Activated CD4-positive, alpha-beta T cell treated with anti-CD3 and anti-CD28 coated beads for 36 hours (primary cell): ENCODE measurements at regions of chr3 and their contacts with region 1.

Region 1: DNA sequence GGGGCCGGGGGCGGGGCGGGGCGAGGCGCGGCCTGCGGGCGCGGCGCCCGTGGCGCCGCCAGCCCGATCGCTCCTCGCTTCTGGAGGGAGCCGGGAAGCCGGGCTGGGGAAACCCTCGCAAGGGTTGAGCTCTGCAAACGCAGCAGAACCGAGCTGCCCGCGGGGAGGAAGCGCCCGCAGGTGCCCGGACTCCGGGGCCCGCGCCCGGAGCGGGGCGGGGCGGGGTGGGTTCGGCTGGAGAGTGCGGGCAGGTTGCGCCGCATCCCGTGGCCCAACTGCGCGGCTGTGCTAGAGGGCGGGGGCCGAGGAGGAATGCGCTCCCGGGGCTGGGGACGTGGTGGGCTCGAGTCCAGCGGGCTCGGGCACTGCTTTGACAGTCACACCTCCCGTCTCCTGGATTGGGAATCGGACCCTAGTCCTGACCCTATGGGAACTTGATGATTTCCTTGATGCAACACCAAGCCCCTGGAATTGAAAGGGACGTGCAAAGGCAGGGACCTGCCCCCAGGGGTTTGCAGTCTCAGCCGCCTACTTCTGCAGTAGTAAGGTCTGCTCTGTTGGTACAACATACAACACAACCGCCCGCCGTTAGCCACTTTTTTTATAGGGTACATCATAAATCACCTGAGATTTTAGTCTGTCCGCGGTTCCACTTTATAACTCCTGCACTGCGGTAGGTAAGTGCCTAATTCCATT is 34.3 kb downstream of the ZBTB38 start:
- DNase-seq: peak; percentile 65
- ATAC-seq: peak; percentile 66
- H3K4me3 Mint-ChIP-seq: peak overlapping the region; percentile 84
- H3K27ac Mint-ChIP-seq: peak overlapping the region; percentile 88
- H3K4me1 Mint-ChIP-seq: peaks cover 60% of the 10 kb centered on the region
- H3K27me3 Mint-ChIP-seq: no peaks in the 10 kb centered on the region

Region 2: GRCh38 chr3:141370065-141370533 is 32.5 kb before region 1 on chr3:
- CTCF ChIA-PET with region 1: interaction called, 8 read pairs
- POLR2A ChIA-PET with region 1: no interaction called
- intact Hi-C with region 1: loop called in 1 of 2 experiments (anchors 2 kb)
- DNase-seq: peak; percentile 68
- ATAC-seq: peak; percentile 96
- H3K4me3 Mint-ChIP-seq: no peak overlapping the region
- H3K27ac Mint-ChIP-seq: peak overlapping the region; percentile 35
- H3K4me1 Mint-ChIP-seq: peaks cover 32% of the 10 kb centered on the region
- H3K27me3 Mint-ChIP-seq: no peaks in the 10 kb centered on the region

Region 3: DNA sequence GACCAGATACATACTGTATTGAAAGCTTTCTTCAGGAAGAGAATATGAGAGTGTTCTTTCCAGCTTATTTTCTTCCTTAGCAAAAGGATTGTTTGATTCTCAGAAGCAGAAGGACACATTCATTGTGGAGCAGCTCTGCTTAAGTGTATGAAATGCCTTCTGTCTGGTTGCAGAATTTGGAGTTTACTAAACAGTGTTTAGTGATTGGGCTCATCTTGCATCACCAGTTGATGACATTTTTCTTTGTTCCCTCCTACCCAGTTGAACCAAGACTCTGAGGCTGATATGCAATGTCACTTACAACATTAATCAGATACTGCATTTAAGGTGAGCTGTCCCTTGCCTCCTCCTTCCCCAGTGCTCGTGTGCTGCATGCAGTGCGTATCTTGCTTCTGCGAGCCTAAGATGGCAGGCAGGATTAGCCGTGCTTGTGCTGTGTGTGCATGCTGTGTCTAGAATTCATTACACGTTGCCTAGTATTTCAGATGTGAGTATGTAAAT is 16.0 kb before region 1 on chr3:
- CTCF ChIA-PET with region 1: interaction called, 11 read pairs
- POLR2A ChIA-PET with region 1: no interaction called
- intact Hi-C with region 1: loop called in 1 of 2 experiments (anchors 2 kb)
- DNase-seq: no peak
- ATAC-seq: peak; percentile 53
- H3K4me3 Mint-ChIP-seq: peak overlapping the region; percentile 20
- H3K27ac Mint-ChIP-seq: no peak overlapping the region
- H3K4me1 Mint-ChIP-seq: peaks cover 13% of the 10 kb centered on the region
- H3K27me3 Mint-ChIP-seq: no peaks in the 10 kb centered on the region

Region 4: GRCh38 chr3:141544697-141545096 is 142.1 kb after region 1 on chr3:
- CTCF ChIA-PET with region 1: no interaction called
- POLR2A ChIA-PET with region 1: no interaction called
- intact Hi-C with region 1: no loop called
- DNase-seq: peak; percentile 22
- ATAC-seq: peak; percentile 52
- H3K4me3 Mint-ChIP-seq: peak overlapping the region; percentile 46
- H3K27ac Mint-ChIP-seq: peak overlapping the region; percentile 89
- H3K4me1 Mint-ChIP-seq: peaks cover 88% of the 10 kb centered on the region
- H3K27me3 Mint-ChIP-seq: no peaks in the 10 kb centered on the region